ENCODE measurements at regions of chr18 and their contacts with region 1.

Region 1: GRCh38 chr18:48445540-48445939 is 36.4 kb upstream of the ZBTB7C start:
- DNase-seq: peak; percentile 84
- H3K4me3 Mint-ChIP-seq: no peak overlapping the region
- H3K27ac Mint-ChIP-seq: no peak overlapping the region
- H3K4me1 Mint-ChIP-seq: peaks cover 6% of the 10 kb centered on the region
- H3K27me3 Mint-ChIP-seq: peaks cover 36% of the 10 kb centered on the region

Region 2: DNA sequence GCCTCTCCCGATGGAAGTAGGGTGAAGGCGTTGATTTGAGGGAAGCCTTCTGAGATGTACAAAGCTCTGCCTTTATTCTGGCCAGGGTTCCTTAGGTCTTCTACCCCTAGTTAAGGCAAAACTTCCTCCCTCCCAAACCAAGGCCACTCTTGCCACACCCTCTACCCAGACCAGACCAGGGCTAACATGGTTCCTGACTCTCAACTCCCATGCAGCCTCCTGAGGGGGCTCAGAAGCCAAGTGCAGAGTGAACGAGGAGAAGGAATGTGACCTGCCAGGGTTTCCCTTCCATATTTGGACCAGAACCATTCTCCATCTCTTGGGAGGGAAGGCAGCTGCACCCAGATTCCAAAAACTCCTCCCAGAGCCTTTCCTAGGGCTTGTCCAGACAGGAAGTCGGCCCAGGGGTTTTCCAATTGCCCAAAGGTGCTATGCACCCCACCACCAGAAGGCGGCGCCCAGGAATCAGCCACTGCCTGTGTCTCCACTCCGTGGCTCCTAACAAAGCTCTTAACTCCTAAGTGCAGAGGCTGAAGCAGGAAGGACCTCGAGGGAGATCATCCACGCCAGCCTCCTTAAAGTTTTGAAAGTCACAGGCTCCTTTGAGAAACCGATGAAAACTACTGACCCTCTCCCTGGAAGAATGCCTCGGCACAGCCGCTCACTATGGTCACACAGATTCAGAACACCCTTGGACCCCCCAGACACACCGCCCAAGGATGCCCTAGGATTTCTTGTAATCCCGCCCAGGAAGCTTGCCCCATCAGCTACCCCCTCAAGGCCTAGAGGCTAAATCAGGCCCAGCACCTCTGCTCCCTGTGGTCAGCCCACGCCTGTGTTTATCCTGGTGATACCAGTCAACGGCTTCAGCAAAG is 672.9 kb before region 1 on chr18:
- CTCF ChIA-PET with region 1: interaction called, 3 read pairs
- intact Hi-C with region 1: loop called (anchors 1 kb)
- DNase-seq: peak; percentile 75
- H3K4me3 Mint-ChIP-seq: no peak overlapping the region
- H3K27ac Mint-ChIP-seq: no peak overlapping the region
- H3K4me1 Mint-ChIP-seq: no peaks in the 10 kb centered on the region
- H3K27me3 Mint-ChIP-seq: peaks cover 4% of the 10 kb centered on the region

Region 3: GRCh38 chr18:48230467-48231113 is 214.9 kb before region 1 on chr18:
- CTCF ChIA-PET with region 1: no interaction called
- intact Hi-C with region 1: loop called (anchors 1 kb)
- DNase-seq: peak; percentile 40
- H3K4me3 Mint-ChIP-seq: no peak overlapping the region
- H3K27ac Mint-ChIP-seq: no peak overlapping the region
- H3K4me1 Mint-ChIP-seq: no peaks in the 10 kb centered on the region
- H3K27me3 Mint-ChIP-seq: peaks cover under 1% of the 10 kb centered on the region

Region 4: DNA sequence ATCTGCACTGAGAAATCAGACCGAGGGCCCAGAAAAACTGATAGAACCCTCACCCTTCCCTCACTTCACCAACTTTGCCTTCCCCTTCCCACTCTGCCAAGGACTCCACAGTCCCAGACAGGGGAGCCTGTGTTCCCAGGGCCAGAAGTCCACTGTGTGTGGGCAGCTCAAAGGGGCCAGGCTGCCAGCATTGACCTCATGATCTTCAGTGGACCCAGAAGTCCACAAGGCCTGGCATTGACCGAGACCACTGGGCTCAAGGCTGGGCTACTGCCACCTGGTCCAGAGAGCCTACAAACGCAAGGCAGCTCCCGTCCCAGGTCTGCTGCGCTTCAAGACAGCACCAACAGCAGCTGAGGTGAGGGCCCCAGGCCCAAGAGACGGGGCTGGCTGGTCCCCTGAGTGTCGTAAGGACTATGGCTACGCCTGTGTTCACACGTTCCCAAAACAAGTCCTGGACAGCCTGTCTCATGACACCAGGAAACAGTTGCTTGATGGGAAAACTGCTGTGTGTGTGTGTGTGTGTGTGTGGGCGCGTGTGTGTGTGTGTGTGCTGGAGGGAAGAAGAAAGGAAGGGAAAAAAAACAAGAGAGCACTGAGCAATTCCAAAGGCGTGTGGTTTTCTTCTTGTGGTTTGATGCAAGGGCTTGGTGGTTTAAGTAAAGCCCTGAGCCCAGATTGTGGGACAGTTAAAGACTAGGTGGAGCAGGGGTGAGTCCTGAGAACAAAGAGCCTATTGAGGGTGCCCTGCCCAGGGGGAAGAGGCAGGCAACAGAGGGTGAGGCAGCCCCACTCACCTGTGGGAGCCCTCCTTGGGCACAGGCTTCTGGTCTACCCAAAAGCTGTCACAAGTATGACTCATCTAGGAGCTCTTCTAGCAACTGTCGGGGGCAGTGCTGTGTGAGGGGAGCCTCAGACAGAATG is 10.3 kb after region 1 on chr18:
- CTCF ChIA-PET with region 1: interaction called, 11 read pairs
- intact Hi-C with region 1: loop called (anchors 1 kb)
- DNase-seq: peak; percentile 45
- H3K4me3 Mint-ChIP-seq: no peak overlapping the region
- H3K27ac Mint-ChIP-seq: no peak overlapping the region
- H3K4me1 Mint-ChIP-seq: peaks cover 26% of the 10 kb centered on the region
- H3K27me3 Mint-ChIP-seq: peaks cover 44% of the 10 kb centered on the region

Region 5: DNA sequence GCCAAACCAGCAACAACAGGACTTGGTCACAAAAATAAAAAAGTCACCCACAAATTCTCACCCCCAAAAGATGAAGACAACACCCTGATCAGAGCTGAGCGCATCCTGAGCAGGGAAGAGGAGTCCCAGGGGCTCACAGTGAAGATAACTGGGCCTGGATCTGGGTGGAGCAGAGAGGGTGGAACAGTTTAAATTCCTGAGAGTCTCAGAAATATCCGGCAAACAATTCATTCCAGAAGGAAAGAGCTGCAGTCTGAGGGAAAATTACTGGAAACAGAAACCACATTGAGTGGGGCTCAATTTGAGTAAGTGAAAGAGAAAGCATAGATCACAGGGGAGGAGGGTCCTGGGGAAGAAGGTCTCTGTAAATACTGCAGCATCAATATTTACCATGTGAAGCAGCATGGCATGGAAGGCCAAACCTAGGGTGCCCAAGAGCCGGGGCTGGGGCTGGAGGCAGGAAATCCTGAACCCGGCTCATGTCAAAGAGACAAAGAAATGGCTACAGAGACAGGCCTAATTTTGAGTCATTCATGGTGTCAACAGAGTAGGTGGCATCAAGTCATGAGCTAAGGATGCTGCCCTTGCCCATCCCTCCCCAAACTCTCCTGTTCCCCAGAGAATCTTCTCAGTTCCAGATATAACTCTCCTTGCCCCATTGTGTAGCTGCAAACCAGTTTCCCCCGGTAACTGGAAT is 25.1 kb after region 1 on chr18:
- CTCF ChIA-PET with region 1: interaction called, 27 read pairs
- intact Hi-C with region 1: loop called (anchors 1 kb)
- DNase-seq: no peak
- H3K4me3 Mint-ChIP-seq: no peak overlapping the region
- H3K27ac Mint-ChIP-seq: no peak overlapping the region
- H3K4me1 Mint-ChIP-seq: no peaks in the 10 kb centered on the region
- H3K27me3 Mint-ChIP-seq: peaks cover 23% of the 10 kb centered on the region

Region 6: GRCh38 chr18:48663931-48664847 is 218.6 kb after region 1 on chr18:
- CTCF ChIA-PET with region 1: no interaction called
- intact Hi-C with region 1: loop called (anchors 1 kb)
- DNase-seq: peak; percentile 65
- H3K4me3 Mint-ChIP-seq: no peak overlapping the region
- H3K27ac Mint-ChIP-seq: no peak overlapping the region
- H3K4me1 Mint-ChIP-seq: no peaks in the 10 kb centered on the region
- H3K27me3 Mint-ChIP-seq: no peaks in the 10 kb centered on the region